Activated CD4-positive, alpha-beta T cell treated with anti-CD3 and anti-CD28 coated beads, Interleukin-2, amount 10 ng/mL, durations not matched to agents 24 days and 14 days (primary cell): ENCODE measurements at regions of chr22 and their contacts with region 1.

Region 1: GRCh38 chr22:25202290-25202921 is 2.7 kb downstream of the CRYBB3 start:
- DNase-seq: peak; percentile 87
- H3K4me3 Mint-ChIP-seq: no peak overlapping the region
- H3K27ac Mint-ChIP-seq: no peak overlapping the region
- H3K4me1 Mint-ChIP-seq: peaks cover 2% of the 10 kb centered on the region
- H3K27me3 Mint-ChIP-seq: no peaks in the 10 kb centered on the region

Region 2: DNA sequence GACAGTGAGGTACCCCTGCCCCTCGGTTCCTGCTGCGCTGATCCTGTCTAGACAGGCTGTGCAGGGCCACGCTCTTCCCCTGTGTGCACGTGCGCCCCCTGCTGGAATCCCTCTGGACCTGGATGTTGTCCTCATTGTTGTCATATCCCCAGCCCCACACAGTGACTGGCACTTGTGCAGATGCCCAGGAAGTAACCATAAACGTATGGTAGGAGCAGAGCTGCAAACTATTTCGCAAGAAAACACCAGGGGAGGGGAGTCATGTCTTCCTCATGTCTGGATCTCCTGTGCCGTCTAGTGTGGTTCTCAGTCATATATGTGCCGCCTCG is 131.7 kb after region 1 on chr22:
- intact Hi-C with region 1: loop called (anchors 10 kb)
- DNase-seq: peak; percentile 85
- H3K4me3 Mint-ChIP-seq: no peak overlapping the region
- H3K27ac Mint-ChIP-seq: no peak overlapping the region
- H3K4me1 Mint-ChIP-seq: peaks cover 5% of the 10 kb centered on the region
- H3K27me3 Mint-ChIP-seq: no peaks in the 10 kb centered on the region

Region 3: DNA sequence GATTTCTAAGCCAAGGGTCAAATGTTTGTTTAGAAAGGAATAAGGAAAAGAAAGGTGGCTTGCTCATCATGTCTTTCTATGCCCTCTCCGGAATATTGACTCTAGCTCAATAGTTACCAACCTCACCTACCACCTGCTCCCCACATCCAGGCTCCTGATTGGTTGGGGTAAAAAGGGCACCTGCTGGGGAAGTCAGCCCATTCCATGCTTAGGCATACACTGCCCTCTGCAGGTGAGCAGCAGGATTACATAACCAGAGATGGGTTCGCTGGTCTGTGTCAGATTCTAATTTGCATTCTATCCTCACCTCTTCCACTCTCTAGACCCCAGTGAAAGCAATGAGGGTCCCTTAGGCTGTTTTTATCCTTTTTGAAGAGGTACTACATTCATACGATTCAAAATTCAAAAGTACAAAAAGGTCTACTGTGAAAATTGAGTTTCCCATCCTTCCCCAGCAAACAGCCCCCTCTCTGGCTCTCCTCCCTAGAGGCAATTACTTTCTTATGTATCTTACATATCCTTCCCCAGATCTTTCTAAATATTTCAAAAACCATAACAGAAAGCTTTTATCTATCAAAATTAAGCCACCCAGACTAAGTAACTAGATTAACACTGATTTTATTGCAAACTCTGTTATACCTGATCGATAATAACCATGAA is 1128.7 kb after region 1 on chr22:
- intact Hi-C with region 1: loop called (anchors 2 kb)
- DNase-seq: peak; percentile 88
- H3K4me3 Mint-ChIP-seq: no peak overlapping the region
- H3K27ac Mint-ChIP-seq: no peak overlapping the region
- H3K4me1 Mint-ChIP-seq: no peaks in the 10 kb centered on the region
- H3K27me3 Mint-ChIP-seq: peaks cover 10% of the 10 kb centered on the region